ENCODE measurements at regions of chr17 and their contacts with region 1.

Region 1: DNA sequence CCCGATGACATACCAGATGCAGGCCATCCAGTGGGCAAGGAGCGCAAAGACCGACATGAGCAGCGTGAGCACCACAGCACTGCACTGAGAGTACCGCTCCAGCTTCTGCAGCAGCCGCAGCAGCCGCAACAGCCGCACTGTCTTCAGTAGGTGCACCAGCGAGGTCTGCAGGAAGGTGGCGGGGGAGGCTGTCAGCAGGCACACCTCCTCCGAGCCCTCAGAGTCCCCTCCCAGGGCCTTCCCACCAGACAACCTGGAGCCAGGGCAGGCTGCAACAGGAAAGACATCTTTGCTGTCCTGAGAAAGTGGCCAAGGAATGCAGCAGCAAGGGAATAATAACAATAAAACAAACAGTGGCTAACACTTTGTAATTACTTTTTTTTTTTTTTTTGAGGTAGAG is 9.1 kb downstream of the KCNH4 start:
- DNase-seq: no peak

Region 2: GRCh38 chr17:42072323-42073187 is 99.3 kb before region 1 on chr17:
- in situ Hi-C with region 1: no loop called
- DNase-seq: no peak

Region 3: DNA sequence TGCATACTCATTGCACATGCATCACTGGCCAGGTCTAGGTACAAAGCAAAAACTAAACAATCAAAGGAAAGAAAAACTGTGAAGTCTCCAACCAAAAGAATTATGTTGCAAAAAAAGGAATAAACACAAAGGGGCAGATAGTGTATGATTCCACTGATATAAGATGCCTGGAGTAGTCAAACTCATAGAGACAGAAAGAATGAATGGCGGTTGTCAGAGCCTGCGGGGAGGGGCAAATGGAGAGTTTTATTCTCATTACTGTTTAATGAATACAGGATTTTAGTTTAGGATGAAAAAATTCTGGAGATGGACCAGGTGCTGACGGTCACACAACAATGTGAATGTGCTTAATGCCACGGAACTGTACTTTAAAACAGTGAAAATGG is 83.6 kb after region 1 on chr17:
- in situ Hi-C with region 1: loop called (anchors 5 kb)
- DNase-seq: no peak